Activated CD8-positive, alpha-beta memory T cell treated with anti-CD3 and anti-CD28 coated beads, Interleukin-2, amount 10 ng/mL, durations not matched to agents 7 days and 5 days (primary cell): ENCODE measurements at regions of chr18 and their contacts with region 1.

Region 1: DNA sequence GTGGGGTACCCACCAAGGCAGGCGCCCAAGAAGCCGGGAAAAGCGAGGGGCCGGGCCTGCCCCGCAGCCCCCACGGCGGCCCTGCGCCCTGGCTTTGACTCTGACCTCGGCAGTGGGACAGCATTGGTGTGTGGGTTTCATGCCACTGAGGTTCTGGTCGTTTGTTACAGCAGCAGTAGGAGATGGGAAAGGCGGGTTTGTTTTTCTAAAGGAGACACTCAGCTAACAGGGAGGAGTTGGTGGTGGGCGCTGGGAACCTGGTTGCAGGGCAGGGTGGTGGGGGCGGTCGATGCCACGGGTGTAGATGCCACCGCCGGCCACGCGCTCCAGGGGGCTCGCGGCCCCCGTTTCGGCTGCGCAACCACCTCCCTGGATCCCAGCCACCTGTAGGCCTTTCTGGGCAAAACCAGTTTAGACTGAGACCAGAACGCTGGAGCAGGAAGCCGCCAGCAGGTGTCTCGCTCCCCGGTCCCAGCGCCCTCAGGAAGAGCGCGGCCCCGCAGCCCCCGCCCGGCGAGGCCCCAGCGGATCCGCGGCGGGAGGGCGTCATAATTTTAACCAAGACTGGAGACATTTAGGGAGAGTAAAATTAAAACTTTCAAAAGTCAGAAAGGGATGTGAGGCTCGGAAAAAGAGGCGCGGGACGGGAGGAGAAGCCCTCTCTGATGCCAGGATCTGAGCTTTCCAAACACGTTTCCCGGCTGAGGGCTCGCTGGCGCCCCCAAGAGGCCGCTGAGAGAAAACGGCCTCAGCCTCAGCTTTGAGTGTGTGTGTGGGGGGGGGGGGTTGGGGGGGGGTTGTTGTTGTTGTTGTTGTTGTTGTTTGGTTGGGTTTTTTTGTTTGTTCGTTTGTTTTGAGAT is 17.4 kb downstream of the CIDEA start:
- DNase-seq: peak; percentile 52
- ATAC-seq: peak; percentile 86
- H3K4me3 Mint-ChIP-seq: peak overlapping the region; percentile 53
- H3K27ac Mint-ChIP-seq: no peak overlapping the region
- H3K4me1 Mint-ChIP-seq: no peaks in the 10 kb centered on the region
- H3K27me3 Mint-ChIP-seq: peaks cover 18% of the 10 kb centered on the region

Region 2: DNA sequence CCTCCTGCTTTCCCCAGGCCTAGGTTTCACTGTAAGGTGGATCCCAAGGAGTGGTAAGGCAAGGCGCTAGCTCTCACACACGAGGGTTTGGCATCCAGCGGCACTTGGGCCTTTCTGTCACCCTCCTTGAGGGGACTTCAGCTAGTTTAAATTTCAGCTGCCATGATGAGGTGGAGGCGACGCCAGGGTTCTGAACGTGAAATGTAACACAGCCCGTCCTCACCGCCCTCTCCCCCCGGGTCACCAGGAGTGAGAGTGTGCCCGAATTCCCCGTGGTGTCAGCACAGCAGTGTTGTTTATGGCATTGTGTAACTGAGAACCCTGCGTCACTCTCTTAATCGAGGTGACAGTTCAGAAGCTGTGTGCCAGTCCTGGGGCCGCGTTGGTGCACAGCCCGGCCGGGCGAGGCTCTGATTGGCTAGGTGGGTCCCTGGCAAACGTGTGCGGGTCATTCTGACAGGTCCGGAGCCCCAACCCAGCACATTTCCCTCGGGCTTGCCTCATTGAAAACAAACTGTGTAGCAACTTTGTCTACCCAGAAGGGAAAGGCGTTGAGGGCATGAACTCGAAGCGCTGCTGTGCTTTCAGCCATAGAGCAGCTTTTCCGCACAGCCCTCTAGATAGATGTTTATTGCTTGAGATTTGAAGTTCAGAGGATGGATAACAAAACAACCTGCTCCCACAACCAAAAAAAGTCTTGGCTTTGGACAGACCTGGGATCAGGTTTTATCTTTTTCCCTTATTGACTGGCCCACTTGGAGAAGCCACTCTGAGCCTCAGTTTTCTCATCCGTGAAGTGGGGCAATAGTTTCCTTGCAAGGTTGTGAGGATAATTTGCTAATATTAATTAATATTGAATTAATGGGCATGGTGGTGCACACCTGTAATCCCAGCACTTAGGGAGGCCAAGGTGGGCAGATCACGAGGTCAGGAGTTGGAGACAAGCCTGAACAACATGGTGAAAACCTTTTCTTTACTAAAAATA is 12.6 kb before region 1 on chr18:
- CTCF ChIA-PET with region 1: interaction called, 11 read pairs
- DNase-seq: no peak
- ATAC-seq: no peak
- H3K4me3 Mint-ChIP-seq: no peak overlapping the region
- H3K27ac Mint-ChIP-seq: no peak overlapping the region
- H3K4me1 Mint-ChIP-seq: no peaks in the 10 kb centered on the region
- H3K27me3 Mint-ChIP-seq: peaks cover 56% of the 10 kb centered on the region

Region 3: GRCh38 chr18:12283256-12283655 is 11.7 kb after region 1 on chr18:
- CTCF ChIA-PET with region 1: interaction called, 15 read pairs
- DNase-seq: no peak
- ATAC-seq: no peak
- H3K4me3 Mint-ChIP-seq: no peak overlapping the region
- H3K27ac Mint-ChIP-seq: no peak overlapping the region
- H3K4me1 Mint-ChIP-seq: peaks cover 2% of the 10 kb centered on the region
- H3K27me3 Mint-ChIP-seq: peaks cover 49% of the 10 kb centered on the region

Region 4: DNA sequence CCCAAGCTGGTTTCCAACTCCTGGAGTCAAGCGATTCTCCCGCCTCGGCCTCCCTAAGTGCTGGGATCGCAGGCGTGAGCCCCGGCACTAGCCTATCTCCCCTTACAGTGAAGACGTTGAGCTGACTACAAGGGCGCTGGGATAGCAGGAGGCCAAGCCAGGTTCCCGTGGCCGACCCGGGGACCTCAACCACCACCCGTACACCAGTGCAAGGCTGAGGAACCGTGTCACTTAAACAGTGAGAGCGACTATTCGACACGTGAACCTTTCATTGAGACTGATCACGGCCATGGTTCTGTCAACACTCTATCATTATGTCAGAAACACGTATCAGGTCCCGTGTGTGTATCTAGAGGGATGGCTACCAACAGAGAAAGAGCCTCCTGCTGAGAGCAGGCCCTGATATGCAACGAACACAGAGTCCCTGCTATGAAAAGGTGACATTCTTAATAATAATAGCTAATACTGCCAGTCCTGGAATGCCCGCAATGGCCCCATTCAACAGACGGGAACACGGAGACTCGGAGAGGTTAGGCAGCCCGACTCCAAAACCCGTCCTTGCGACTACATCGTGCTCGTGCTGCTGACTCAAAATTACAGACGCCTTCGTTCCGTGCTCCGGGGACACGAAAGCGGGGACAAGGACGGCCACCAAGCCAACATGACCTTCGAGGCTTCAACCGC is 104.6 kb after region 1 on chr18:
- CTCF ChIA-PET with region 1: no interaction called
- DNase-seq: peak; percentile 46
- ATAC-seq: no peak
- H3K4me3 Mint-ChIP-seq: peak overlapping the region; percentile 88
- H3K27ac Mint-ChIP-seq: peak overlapping the region; percentile 95
- H3K4me1 Mint-ChIP-seq: peaks cover 53% of the 10 kb centered on the region
- H3K27me3 Mint-ChIP-seq: peaks cover 7% of the 10 kb centered on the region

Region 5: DNA sequence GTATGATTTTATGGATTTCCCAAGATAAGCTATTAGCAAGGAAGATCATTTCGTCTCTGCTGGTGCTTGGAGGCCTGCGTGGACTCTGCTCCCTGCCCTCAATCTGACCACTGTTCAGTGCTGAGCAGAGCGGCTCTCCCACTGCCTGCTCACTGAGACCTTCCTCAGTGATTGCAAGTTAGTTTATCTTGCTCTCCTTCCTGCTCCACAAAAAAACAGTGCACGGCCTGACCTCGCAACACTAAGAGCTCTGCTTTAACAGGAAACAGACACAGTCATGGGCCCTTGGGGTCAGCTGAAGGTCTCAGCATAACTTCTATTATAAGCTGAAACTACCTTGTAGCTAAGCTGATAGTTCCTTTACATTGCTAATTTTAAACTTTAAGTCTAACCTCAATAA is 189.3 kb after region 1 on chr18:
- CTCF ChIA-PET with region 1: no interaction called
- DNase-seq: peak; percentile 40
- ATAC-seq: no peak
- H3K4me3 Mint-ChIP-seq: no peak overlapping the region
- H3K27ac Mint-ChIP-seq: no peak overlapping the region
- H3K4me1 Mint-ChIP-seq: no peaks in the 10 kb centered on the region
- H3K27me3 Mint-ChIP-seq: no peaks in the 10 kb centered on the region

Region 6: GRCh38 chr18:12574494-12575185 is 303.0 kb after region 1 on chr18:
- CTCF ChIA-PET with region 1: no interaction called
- DNase-seq: no peak
- ATAC-seq: no peak
- H3K4me3 Mint-ChIP-seq: no peak overlapping the region
- H3K27ac Mint-ChIP-seq: no peak overlapping the region
- H3K4me1 Mint-ChIP-seq: no peaks in the 10 kb centered on the region
- H3K27me3 Mint-ChIP-seq: peaks cover 13% of the 10 kb centered on the region

Region 7: DNA sequence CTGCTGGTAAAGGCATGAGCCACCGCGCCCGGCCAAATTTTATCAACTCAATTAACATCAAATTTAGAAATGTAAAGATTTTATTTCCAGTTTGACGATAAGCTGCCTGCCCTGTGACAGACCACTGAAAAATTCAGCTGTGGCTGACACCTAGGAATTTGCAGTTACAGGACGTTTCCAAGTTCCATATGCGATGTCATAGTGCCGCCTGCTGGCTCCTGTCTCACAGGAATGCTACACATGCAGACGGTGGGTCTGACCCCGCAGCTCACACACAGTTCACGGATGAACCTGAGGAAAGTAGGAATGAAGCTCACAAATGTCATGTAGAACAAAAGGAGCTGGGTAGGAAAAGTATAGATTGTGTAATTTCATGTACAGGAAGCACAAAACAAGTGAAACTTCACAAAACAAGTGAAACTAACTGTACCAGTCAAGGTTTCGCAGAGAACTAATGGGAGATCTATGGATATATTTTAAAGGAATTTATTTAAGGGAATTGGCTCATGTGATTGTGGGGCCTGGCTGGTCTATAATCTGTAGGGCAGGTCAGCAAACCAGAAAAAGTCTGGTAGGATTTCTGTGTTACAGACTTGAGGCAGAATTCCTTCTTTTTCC is 663.0 kb after region 1 on chr18:
- CTCF ChIA-PET with region 1: no interaction called
- DNase-seq: peak; percentile 85
- ATAC-seq: peak; percentile 91
- H3K4me3 Mint-ChIP-seq: peak overlapping the region; percentile 14
- H3K27ac Mint-ChIP-seq: no peak overlapping the region
- H3K4me1 Mint-ChIP-seq: peaks cover 6% of the 10 kb centered on the region
- H3K27me3 Mint-ChIP-seq: peaks cover 12% of the 10 kb centered on the region